Posterior cingulate gyrus (tissue), 11 donors: ENCODE measurements at regions of chr10 and their contacts with region 1.

Region 1: GRCh38 chr10:103542764-103543616 is 49.5 kb downstream of the NEURL1 start:
- DNase-seq: peak in 9 of 10 donors; percentile 38 to 94 (median 72)

Region 2: DNA sequence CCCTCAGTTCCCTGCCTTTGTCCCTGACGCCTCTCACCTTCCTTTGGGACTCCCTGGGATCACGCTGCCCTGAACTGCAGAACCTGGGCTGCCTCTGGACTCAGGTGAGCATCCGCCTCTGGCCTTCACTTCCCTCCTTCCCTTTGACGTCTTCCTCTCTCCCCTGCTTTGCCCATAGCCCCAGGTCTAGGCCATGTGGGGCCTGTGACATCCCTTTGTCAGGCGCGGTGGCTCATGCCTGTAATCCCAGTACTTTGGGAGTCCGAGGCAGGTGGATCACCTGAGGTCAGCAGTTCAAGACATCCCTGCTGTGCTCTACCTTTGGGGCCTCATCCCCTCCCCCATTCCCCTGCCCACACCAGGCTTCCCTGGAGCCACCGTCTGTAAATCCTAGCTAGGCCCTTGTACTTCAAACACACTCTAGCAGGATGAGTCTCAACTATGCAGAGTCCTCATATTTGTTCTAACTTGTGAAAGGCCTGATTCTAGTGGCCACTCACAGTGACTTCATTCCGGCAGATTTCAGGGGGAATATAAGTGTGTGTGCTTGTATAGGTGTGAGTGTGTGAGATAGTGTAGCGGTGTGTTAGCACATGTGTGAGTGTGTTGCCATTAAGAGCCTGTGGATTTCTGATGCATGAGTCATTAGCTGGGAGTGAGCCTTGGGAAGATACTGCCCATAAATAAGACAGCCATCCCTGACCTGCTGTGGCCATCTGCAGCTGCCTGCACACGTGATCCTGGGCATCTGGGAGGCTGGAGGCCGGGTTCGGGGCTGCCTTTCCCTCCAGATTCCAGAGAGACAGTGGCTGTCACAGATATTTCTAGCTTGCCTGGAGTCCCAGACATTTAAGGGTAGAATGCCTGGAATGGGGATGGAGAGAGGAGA is 51.3 kb before region 1 on chr10:
- intact Hi-C with region 1: loop called (anchors 5 kb)
- DNase-seq: peak in 2 of 10 donors; percentile 63 to 64

Region 3: GRCh38 chr10:103626178-103626577 is 83.2 kb after region 1 on chr10:
- intact Hi-C with region 1: no loop called
- DNase-seq: peak in 4 of 10 donors; percentile 42 to 83 (median 56)